Colonic mucosa (tissue), 4 donors: ENCODE measurements at regions of chr17 and their contacts with region 1.

Region 1: GRCh38 chr17:29148790-29149430 is 31.3 kb downstream of the MYO18A start:
- DNase-seq: peak; percentile 96
- H3K4me3 ChIP-seq: peak overlapping the region; percentile 50
- H3K27ac ChIP-seq: peak overlapping the region; percentile 69
- H3K4me1 ChIP-seq: peaks cover 6% of the 10 kb centered on the region
- H3K27me3 ChIP-seq: no peaks in the 10 kb centered on the region
- CTCF ChIP-seq: peak; percentile 95

Region 2: DNA sequence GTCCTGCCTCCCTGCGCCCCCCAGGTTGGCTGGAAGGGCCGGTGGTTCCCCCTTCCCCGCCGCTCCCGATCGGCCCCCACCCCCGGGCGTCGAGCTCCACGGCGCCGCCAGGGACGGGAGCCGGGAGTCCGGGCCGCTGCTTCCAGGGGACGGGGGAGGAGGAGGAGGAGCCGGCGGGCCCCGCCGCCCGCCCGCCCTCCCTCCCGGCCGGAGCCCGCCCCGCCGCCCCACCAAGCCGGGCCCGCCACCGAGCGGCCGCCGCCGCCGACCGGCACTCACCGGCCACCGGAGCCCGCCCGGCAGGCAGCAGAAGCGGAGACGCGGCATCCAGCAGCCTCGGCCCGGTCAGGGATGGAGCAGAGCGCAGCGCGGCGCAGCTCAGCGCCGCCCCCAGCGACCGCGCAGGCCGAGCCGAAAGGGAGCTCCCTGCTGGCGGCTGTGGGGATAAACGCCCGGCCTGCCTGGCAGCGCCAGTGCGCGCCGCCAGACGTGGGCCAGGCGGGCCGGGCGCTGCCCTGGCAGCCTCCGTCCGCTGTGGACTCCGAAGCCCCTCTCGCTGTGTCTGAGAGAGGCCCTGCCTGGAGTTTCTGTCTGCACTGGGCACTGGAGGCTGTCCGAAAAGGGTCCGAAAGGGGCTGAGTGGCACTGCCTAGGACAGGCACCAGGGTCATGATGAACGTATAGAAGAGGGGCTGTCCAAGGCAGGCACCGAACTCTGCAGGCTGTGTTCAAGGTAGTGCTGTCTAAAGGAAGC is 31.3 kb after region 1 on chr17 and contains the start of gene MYO18A:
- intact Hi-C with region 1: loop called (anchors 5 kb)
- DNase-seq: peak; percentile 83
- H3K4me3 ChIP-seq: peak within 1 kb of the TSS; percentile 60
- H3K27ac ChIP-seq: peak within 1 kb of the TSS; percentile 94
- H3K4me1 ChIP-seq: peaks cover 6% of the 10 kb centered on the region
- H3K27me3 ChIP-seq: no peaks in the 10 kb centered on the region
- CTCF ChIP-seq: peak; percentile 69
- total RNA-seq, gene MYO18A: 63.3 to 112 TPM

Region 3: GRCh38 chr17:29219378-29220047 is 70.6 kb after region 1 on chr17:
- intact Hi-C with region 1: loop called (anchors 1 kb)
- DNase-seq: peak; percentile 79
- H3K4me3 ChIP-seq: no peak overlapping the region
- H3K27ac ChIP-seq: no peak overlapping the region
- H3K4me1 ChIP-seq: no peaks in the 10 kb centered on the region
- H3K27me3 ChIP-seq: no peaks in the 10 kb centered on the region
- CTCF ChIP-seq: peak; percentile 82

Region 4: DNA sequence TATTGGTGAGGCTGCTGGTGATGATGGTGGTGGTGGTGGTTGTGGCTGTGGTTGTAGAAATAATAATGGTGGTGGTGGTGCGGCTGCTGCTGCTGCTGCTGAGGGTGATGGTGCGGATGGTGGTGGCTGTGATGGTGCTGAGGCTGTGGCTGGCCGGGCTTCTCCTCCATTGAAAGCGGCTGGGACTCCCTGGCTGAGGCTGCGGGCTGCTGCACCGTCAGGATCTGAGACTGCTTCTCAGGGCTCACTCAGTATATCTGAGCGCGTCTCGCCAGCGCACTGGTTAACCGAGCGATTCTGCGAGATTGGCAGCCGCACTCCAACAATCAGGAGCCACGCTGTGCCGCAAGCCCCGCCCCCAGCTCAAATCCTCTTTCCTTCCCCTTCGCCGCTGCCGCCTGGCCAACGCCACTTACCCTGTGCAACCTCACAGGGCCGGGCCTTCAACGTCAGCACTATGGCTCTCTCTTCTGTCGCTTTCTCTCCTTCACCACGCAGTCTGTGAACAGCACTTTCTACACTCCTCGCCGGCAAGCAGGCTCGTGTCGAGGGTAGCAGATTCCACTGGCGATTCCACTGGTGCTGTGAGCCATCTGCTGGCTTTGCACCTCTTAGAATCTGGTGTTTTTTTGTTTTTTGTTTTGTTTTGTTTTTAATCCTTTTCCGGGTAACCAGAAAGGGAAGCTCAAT is 145.1 kb after region 1 on chr17 and contains the start of gene NUFIP2:
- intact Hi-C with region 1: loop called (anchors 5 kb)
- DNase-seq: peak; percentile 100
- H3K4me3 ChIP-seq: peak within 1 kb of the TSS; percentile 92
- H3K27ac ChIP-seq: peak within 1 kb of the TSS; percentile 100
- H3K4me1 ChIP-seq: peaks cover 19% of the 10 kb centered on the region
- H3K27me3 ChIP-seq: no peaks in the 10 kb centered on the region
- CTCF ChIP-seq: no peak
- total RNA-seq, gene NUFIP2: 39.9 to 46.9 TPM